ENCODE measurements at regions of chr7 and their contacts with region 1.

Region 1: GRCh38 chr7:147535701-147536111 is 1054.9 kb upstream of the C7orf33 start:
- DNase-seq: peak; percentile 73
- H3K4me3 ChIP-seq: no peak overlapping the region
- CTCF ChIP-seq: no peak

Region 2: GRCh38 chr7:147547249-147547897 is 11.7 kb after region 1 on chr7:
- CTCF ChIA-PET with region 1: interaction called, 15 read pairs
- POLR2A ChIA-PET with region 1: no interaction called
- DNase-seq: no peak
- H3K4me3 ChIP-seq: no peak overlapping the region
- CTCF ChIP-seq: peak; percentile 33

Measured in AG04449 (cell line).